CD4-positive, alpha-beta memory T cell (primary cell): ENCODE measurements at regions of chr11 and their contacts with region 1.

Region 1: DNA sequence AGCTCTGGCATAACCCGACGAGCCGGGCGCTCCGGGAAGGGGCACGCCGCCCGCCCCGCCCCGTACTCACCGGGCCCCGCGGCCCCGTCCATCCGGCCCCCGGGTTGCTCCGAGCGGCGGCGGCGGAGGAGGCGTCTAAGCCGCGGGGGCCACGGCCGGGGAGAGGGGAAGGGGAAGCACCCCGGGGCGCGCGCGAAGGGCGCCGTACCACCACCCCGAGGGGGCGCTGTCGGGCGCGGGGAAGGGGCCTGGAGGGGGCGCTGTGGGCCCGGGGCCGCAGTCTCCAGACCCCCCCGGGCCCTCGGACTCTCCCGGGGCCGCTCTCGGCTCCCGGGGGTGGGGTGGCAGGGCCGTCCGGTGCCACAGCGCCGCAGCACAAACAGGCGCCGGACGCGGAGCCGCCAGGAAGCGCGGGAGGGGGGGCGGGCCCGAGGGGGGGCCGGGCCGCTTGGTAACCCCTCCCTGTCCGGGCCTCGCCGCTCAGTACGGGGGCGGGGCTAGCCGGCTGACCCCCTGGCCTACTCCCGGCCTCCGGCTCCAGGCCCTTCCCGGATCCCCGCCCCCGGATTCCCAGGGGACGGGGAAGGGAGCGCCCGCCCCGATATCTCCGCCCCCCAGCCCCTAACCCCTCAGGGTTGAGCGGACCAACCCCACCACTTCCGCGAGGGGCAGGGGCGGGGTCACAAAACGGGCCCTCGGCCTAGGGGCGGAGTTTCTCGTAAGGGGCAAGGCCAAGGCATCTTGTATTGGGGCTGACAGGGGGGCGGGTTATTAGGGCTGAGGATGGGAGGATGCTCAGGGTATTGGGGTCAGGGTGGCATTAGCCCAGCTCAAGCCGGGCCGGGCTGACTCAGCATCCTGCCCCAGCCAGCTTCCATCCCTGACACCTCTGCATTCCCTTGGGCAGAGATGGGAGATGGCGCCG is at the starts of genes EML3 and ROM1:
- DNase-seq: peak; percentile 85 to 88 (median 86)
- H3K4me3 ChIP-seq: peak within 1 kb of the TSS; percentile 73 to 93
- H3K4me3 Mint-ChIP-seq: peak within 1 kb of the TSS; percentile 89 to 100 (median 96)
- H3K27ac ChIP-seq: peak within 1 kb of the TSS; percentile 90
- H3K27ac Mint-ChIP-seq: peak within 1 kb of the TSS; percentile 94 to 98 (median 96)
- H3K4me1 ChIP-seq: peaks cover 59% of the 10 kb centered on the region
- H3K4me1 Mint-ChIP-seq: peaks cover 15 to 53% (median 38%) of the 10 kb centered on the region in 4 donors
- H3K27me3 ChIP-seq: no peaks in the 10 kb centered on the region
- H3K27me3 Mint-ChIP-seq: no peaks in the 10 kb centered on the region
- total RNA-seq, gene EML3: 192 to 201 TPM
- total RNA-seq, gene ROM1: 1.6 to 1.9 TPM

Region 2: DNA sequence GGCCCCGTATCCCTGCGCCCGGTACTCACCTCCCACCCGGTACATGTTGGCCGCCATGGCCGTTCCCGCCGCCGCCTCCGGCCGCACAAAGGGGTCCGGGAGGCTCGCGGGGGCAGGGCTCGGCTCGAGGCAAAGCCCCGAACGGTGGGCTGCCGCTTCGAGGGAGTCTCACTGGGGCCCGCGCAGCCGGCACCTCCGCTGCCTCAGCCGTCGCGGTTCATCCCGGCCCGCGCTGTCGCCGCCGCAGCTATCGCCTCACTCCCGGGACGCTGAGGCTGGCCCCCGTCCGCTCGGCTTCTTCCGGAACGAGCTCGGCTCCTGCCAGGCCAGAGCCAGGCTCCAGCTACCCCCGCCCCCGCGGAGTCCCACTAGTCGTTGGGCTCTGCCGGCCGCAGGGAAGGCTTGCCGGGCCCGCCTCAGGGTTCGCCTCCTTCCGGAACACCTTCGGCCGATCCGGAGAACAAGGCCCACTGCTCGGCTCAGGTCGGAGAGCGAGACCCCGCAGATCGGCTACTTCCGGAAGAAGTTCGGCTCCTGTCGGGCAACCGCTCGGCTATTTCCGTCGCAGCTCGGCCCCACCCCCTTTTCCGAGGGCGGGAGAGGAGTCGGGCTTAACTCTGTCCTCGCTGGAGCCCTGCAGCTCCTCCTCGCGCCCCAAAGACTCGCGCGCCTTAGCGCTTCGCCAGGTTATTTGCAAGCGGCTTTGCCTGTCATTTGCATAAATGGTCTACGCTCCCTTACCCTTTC is 11.1 kb before region 1 on chr11 and contains the start of gene MTA2:
- CTCF ChIA-PET with region 1: interaction called, 7 read pairs
- POLR2A ChIA-PET with region 1: interaction called, 142 read pairs
- intact Hi-C with region 1: loop called (anchors 1 kb)
- DNase-seq: peak; percentile 99 to 100 (median 100)
- H3K4me3 ChIP-seq: peak within 1 kb of the TSS; percentile 71 to 82
- H3K4me3 Mint-ChIP-seq: peak within 1 kb of the TSS; percentile 91 to 99 (median 96)
- H3K27ac ChIP-seq: peak within 1 kb of the TSS; percentile 91
- H3K27ac Mint-ChIP-seq: peak within 1 kb of the TSS; percentile 90 to 99 (median 98)
- H3K4me1 ChIP-seq: peaks cover 35% of the 10 kb centered on the region
- H3K4me1 Mint-ChIP-seq: peaks cover 33 to 60% (median 46%) of the 10 kb centered on the region in 4 donors
- H3K27me3 ChIP-seq: no peaks in the 10 kb centered on the region
- H3K27me3 Mint-ChIP-seq: no peaks in the 10 kb centered on the region
- total RNA-seq, gene MTA2: 207 to 210 TPM

Region 3: GRCh38 chr11:62671575-62672389 is 59.2 kb after region 1 on chr11 and contains the starts of genes LBHD1 and UQCC3:
- CTCF ChIA-PET with region 1: interaction called, 6 read pairs
- POLR2A ChIA-PET with region 1: interaction called, 56 read pairs
- intact Hi-C with region 1: no loop called
- DNase-seq: peak; percentile 68 to 80 (median 75)
- H3K4me3 ChIP-seq: peak within 1 kb of the TSS; percentile 91 to 97
- H3K4me3 Mint-ChIP-seq: peak within 1 kb of the TSS; percentile 93 to 99 (median 99)
- H3K27ac ChIP-seq: peak within 1 kb of the TSS; percentile 74
- H3K27ac Mint-ChIP-seq: peak within 1 kb of the TSS; percentile 89 to 98 (median 97)
- H3K4me1 ChIP-seq: peaks cover 55% of the 10 kb centered on the region
- H3K4me1 Mint-ChIP-seq: peaks cover 14 to 74% (median 43%) of the 10 kb centered on the region in 4 donors
- H3K27me3 ChIP-seq: no peaks in the 10 kb centered on the region
- H3K27me3 Mint-ChIP-seq: no peaks in the 10 kb centered on the region
- total RNA-seq, gene LBHD1: 26.7 to 28.6 TPM
- total RNA-seq, gene UQCC3: 7.2 to 8.5 TPM

Region 4: GRCh38 chr11:62860835-62861563 is 248.4 kb after region 1 on chr11:
- CTCF ChIA-PET with region 1: no interaction called
- POLR2A ChIA-PET with region 1: interaction called, 7 read pairs
- intact Hi-C with region 1: loop called (anchors 2 kb)
- DNase-seq: no peak
- H3K4me3 ChIP-seq: no peak overlapping the region
- H3K4me3 Mint-ChIP-seq: no peak overlapping the region
- H3K27ac ChIP-seq: no peak overlapping the region
- H3K27ac Mint-ChIP-seq: peak overlapping the region in 2 of 7 donors; percentile 37 to 72
- H3K4me1 ChIP-seq: peaks cover 23% of the 10 kb centered on the region
- H3K4me1 Mint-ChIP-seq: peaks cover 11 to 25% (median 18%) of the 10 kb centered on the region in 4 donors
- H3K27me3 ChIP-seq: no peaks in the 10 kb centered on the region
- H3K27me3 Mint-ChIP-seq: no peaks in the 10 kb centered on the region